CD8-positive, alpha-beta T cell (primary cell): ENCODE measurements at regions of chr15 and their contacts with region 1.

Region 1: DNA sequence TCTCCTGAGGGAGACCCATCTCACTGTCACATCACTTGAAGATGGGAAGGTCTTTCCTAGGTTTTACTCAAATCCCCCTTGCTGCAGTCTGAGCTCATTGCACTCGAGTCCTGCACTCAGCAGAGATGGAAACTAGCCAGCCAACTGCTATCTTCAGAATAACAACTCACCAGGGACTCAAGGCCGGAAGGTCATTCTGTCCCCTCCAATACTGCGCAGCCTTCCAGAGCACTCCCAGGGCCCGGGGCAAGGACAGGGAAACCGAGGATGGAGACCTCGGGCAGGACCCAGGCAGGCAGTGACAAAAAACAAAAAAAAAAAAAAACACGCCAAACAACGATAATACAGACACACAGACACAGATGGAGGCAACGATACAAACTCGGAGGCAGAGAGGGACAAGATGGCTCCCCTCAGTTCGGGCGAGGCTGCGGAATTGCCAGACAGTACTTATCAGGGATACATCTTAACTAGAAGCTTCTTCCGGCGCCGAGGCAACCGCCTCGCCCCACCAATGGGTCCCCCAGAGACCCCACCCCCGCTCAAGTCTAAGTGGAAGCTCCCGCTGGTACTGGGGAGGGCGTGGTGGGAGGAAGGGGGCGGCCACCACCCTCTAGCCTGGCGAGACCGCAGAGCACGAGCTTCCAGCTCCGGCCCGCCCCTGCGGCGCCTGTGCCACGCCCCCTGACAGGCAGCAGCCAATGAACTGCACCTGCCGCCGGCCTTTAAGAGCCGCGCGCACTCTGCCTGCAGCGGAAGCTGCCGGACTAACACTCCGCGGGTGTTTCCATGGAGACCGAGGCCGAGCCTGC is 7.0 kb upstream of the MAP1A start:
- DNase-seq: peak; percentile 88 to 98 (median 96)
- ATAC-seq: peak; percentile 90
- H3K4me3 ChIP-seq: peak overlapping the region; percentile 65 to 81
- H3K4me3 Mint-ChIP-seq: peak overlapping the region; percentile 94
- H3K27ac ChIP-seq: peak overlapping the region; percentile 74 to 82
- H3K27ac Mint-ChIP-seq: peak overlapping the region; percentile 96
- H3K4me1 ChIP-seq: peaks cover 21% of the 10 kb centered on the region
- H3K4me1 Mint-ChIP-seq: peaks cover 27% of the 10 kb centered on the region
- H3K27me3 ChIP-seq: no peaks in the 10 kb centered on the region
- H3K27me3 Mint-ChIP-seq: no peaks in the 10 kb centered on the region
- CTCF ChIP-seq: peak; percentile 10

Region 2: GRCh38 chr15:42495361-42496212 is 1014.8 kb before region 1 on chr15 and contains the start of gene SNAP23:
- CTCF ChIA-PET with region 1: no interaction called
- POLR2A ChIA-PET with region 1: no interaction called
- intact Hi-C with region 1: loop called in 1 of 2 experiments (anchors 10 kb)
- DNase-seq: peak; percentile 49 to 91 (median 84)
- ATAC-seq: peak; percentile 90
- H3K4me3 ChIP-seq: peak within 1 kb of the TSS; percentile 82 to 90
- H3K4me3 Mint-ChIP-seq: peak within 1 kb of the TSS; percentile 97
- H3K27ac ChIP-seq: peak within 1 kb of the TSS; percentile 60 to 71
- H3K27ac Mint-ChIP-seq: peak within 1 kb of the TSS; percentile 97
- H3K4me1 ChIP-seq: peaks cover 41% of the 10 kb centered on the region
- H3K4me1 Mint-ChIP-seq: peaks cover 76% of the 10 kb centered on the region
- H3K27me3 ChIP-seq: no peaks in the 10 kb centered on the region
- H3K27me3 Mint-ChIP-seq: no peaks in the 10 kb centered on the region
- CTCF ChIP-seq: no peak
- total RNA-seq, gene SNAP23: 30.9 to 39.9 TPM

Region 3: DNA sequence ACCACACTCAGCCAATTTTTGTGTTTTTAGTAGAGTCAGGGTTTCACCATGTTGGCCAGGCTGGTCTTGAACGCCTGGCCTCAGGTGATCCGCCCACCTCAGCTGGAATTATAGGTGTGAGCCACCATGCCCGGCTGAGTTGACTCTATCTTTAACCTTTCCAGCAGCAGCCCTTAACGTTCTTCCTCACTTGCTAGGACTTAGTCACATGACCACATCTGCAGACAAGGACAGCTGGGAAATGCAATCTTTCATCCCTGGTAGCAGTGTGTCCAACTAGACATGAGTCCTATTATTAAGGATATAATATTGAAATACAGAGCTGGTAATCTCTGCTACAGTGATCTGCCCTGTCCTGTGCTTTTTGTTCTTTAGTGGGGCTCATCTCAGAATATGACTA is 198.0 kb before region 1 on chr15:
- CTCF ChIA-PET with region 1: no interaction called
- POLR2A ChIA-PET with region 1: no interaction called
- intact Hi-C with region 1: no loop called
- DNase-seq: no peak
- ATAC-seq: no peak
- H3K4me3 ChIP-seq: no peak overlapping the region
- H3K4me3 Mint-ChIP-seq: no peak overlapping the region
- H3K27ac ChIP-seq: no peak overlapping the region
- H3K27ac Mint-ChIP-seq: no peak overlapping the region
- H3K4me1 ChIP-seq: no peaks in the 10 kb centered on the region
- H3K4me1 Mint-ChIP-seq: no peaks in the 10 kb centered on the region
- H3K27me3 ChIP-seq: peaks cover 0 to 2% of the 10 kb centered on the region in 2 experiments
- H3K27me3 Mint-ChIP-seq: peaks cover 57% of the 10 kb centered on the region
- CTCF ChIP-seq: no peak

Region 4: DNA sequence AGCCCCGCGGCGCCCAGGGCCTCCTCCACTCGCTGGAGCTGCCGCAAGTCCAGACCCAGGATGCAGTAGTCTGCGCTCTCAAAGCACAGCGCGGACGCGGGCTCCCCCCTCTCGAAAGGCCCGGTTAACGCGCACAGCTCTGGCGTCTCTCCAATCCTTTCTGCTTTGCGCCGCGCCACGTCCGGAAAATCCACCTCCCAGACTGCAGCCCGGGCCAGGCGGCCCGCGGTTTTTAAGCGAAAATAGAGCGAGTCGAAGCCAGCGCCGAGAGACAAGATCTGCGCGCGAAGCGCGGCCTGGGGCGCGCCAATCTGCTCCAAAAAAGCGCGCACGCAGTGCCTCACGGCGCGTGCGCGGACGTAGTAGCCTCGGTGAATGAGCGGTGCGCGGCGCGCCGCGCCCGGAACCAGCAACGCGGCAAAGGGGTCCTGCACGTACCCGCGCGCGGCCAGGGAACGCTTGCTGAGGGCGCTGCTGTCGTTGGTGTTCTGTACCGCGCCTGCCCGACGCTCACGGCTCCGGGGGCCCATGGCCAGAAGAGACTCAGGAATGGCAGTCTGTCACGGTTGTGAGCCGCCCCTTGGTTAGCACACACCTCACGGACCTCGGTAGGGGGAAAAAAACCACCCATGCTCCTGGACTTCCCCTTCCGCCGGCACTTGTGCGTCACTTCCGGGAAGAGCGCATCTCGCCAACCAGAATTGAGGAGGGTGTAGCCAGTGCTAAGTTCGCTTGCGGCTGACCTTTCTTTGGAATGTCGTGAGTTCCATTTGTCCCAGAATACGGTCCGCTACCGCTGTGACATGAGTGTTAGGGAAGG is 180.2 kb before region 1 on chr15 and contains the start of gene LCMT2:
- CTCF ChIA-PET with region 1: no interaction called
- POLR2A ChIA-PET with region 1: no interaction called
- intact Hi-C with region 1: loop called (anchors 1 to 5 kb)
- DNase-seq: peak; percentile 80 to 98 (median 91)
- ATAC-seq: peak; percentile 85
- H3K4me3 ChIP-seq: peak within 1 kb of the TSS; percentile 74 to 84
- H3K4me3 Mint-ChIP-seq: peak within 1 kb of the TSS; percentile 98
- H3K27ac ChIP-seq: peak within 1 kb of the TSS; percentile 89 to 96
- H3K27ac Mint-ChIP-seq: peak within 1 kb of the TSS; percentile 100
- H3K4me1 ChIP-seq: peaks cover 23% of the 10 kb centered on the region
- H3K4me1 Mint-ChIP-seq: peaks cover 42% of the 10 kb centered on the region
- H3K27me3 ChIP-seq: no peaks in the 10 kb centered on the region
- H3K27me3 Mint-ChIP-seq: no peaks in the 10 kb centered on the region
- CTCF ChIP-seq: no peak
- total RNA-seq, gene LCMT2: 7.0 to 7.6 TPM

Region 5: GRCh38 chr15:43483306-43484128 is 26.9 kb before region 1 on chr15:
- CTCF ChIA-PET with region 1: interaction called, 24 read pairs
- POLR2A ChIA-PET with region 1: no interaction called
- intact Hi-C with region 1: loop called (anchors 1 to 2 kb)
- DNase-seq: peak in 2 of 9 experiments; percentile 36 to 56
- ATAC-seq: peak; percentile 40
- H3K4me3 ChIP-seq: no peak overlapping the region
- H3K4me3 Mint-ChIP-seq: no peak overlapping the region
- H3K27ac ChIP-seq: no peak overlapping the region
- H3K27ac Mint-ChIP-seq: no peak overlapping the region
- H3K4me1 ChIP-seq: no peaks in the 10 kb centered on the region
- H3K4me1 Mint-ChIP-seq: peaks cover 15% of the 10 kb centered on the region
- H3K27me3 ChIP-seq: no peaks in the 10 kb centered on the region
- H3K27me3 Mint-ChIP-seq: no peaks in the 10 kb centered on the region
- CTCF ChIP-seq: no peak

Region 6: DNA sequence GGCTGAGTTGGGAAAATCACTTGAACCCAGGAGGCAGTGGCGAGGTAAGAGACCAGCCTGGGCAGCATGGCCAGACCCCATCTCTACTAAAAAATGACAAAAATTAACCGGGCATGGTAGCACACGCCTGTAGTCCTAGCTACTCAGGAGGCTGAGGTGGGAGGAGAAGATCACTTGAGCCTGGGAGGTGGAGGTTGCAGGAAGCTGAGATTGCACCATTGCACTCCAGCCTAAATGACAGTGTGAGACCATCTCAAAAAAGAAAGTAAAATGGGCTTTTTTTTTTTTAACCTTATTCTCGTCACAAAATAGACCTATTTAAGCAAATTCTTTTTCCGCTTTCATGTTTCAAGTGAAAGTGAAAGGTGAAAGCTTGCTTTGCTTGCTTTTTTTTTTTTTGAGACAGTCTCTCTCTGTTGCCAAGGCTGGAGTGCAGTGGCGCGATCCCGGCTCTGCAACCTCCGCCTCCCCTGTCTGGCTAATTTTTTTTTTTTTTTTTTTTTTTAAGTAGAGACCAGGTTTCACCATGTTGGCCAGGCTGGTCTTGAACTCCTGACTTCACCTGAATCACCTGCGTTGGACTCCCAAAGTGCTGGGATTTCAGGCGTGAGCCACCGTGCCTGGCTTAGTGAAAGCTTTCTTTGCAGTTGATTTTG is 239.4 kb after region 1 on chr15:
- CTCF ChIA-PET with region 1: no interaction called
- POLR2A ChIA-PET with region 1: interaction called, 4 read pairs
- intact Hi-C with region 1: loop called in 1 of 2 experiments (anchors 10 kb)
- DNase-seq: peak in 5 of 9 experiments; percentile 21 to 91 (median 59)
- ATAC-seq: peak; percentile 53
- H3K4me3 ChIP-seq: peak overlapping the region; percentile 52 to 53
- H3K4me3 Mint-ChIP-seq: peak overlapping the region; percentile 78
- H3K27ac ChIP-seq: peak overlapping the region; percentile 58 to 81
- H3K27ac Mint-ChIP-seq: peak overlapping the region; percentile 92
- H3K4me1 ChIP-seq: peaks cover 60% of the 10 kb centered on the region
- H3K4me1 Mint-ChIP-seq: peaks cover 62% of the 10 kb centered on the region
- H3K27me3 ChIP-seq: no peaks in the 10 kb centered on the region
- H3K27me3 Mint-ChIP-seq: no peaks in the 10 kb centered on the region
- CTCF ChIP-seq: no peak

Region 7: DNA sequence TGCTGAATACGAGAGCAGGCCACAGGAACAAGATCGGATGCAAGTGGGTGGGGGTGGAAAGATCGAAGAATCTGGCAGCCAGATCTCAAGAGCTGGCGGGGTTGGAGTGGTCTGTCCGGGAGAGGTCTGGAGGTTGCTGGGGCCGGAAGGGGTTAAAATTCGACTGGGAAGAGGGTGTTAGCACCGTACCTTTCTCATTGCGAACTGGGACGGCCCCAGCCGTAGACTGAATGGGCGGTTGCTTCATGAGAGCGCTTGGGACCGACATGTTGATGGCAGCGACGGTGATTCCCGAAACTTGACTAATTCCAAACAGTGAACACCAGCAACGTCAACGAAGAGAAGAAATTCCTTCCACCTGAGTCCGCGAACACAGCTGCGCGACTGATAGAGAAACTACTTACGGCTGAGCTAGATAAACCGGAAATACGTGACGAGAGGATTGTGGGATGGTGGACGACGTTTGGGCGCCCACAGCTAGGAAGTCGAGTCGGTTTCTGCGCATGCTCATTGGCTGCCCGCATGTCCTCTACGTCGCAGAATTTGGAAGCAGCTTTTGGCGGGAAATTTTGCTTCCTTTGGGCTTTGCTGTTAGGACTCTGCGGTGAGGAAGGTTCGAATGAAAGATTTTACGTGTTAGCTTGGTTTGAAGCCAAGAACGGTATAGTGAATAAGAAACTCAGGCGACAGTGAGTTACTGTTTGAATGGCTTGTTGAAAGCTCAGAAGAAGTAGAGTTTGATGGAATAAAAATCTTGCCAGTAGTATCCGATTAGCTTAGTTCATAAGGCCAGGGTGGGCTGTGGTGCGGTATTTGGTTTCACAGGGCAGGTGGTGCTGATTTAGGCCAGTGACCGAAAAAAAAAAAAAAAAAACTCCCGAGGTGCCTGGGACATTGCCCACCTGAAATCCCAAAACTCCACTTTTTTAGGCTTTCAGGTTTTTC is 314.2 kb after region 1 on chr15 and contains the start of gene MFAP1:
- CTCF ChIA-PET with region 1: no interaction called
- POLR2A ChIA-PET with region 1: no interaction called
- intact Hi-C with region 1: loop called in 1 of 2 experiments (anchors 10 kb)
- DNase-seq: peak; percentile 78 to 99 (median 91)
- ATAC-seq: peak; percentile 94
- H3K4me3 ChIP-seq: peak within 1 kb of the TSS; percentile 88 to 99
- H3K4me3 Mint-ChIP-seq: peak within 1 kb of the TSS; percentile 99
- H3K27ac ChIP-seq: peak within 1 kb of the TSS; percentile 91 to 97
- H3K27ac Mint-ChIP-seq: peak within 1 kb of the TSS; percentile 98
- H3K4me1 ChIP-seq: peaks cover 53% of the 10 kb centered on the region
- H3K4me1 Mint-ChIP-seq: peaks cover 63% of the 10 kb centered on the region
- H3K27me3 ChIP-seq: no peaks in the 10 kb centered on the region
- H3K27me3 Mint-ChIP-seq: no peaks in the 10 kb centered on the region
- CTCF ChIP-seq: no peak
- total RNA-seq, gene MFAP1: 10.1 to 11.9 TPM